GM12878 (cell line): ENCODE measurements at regions of chr3 and their contacts with region 1.

Region 1: DNA sequence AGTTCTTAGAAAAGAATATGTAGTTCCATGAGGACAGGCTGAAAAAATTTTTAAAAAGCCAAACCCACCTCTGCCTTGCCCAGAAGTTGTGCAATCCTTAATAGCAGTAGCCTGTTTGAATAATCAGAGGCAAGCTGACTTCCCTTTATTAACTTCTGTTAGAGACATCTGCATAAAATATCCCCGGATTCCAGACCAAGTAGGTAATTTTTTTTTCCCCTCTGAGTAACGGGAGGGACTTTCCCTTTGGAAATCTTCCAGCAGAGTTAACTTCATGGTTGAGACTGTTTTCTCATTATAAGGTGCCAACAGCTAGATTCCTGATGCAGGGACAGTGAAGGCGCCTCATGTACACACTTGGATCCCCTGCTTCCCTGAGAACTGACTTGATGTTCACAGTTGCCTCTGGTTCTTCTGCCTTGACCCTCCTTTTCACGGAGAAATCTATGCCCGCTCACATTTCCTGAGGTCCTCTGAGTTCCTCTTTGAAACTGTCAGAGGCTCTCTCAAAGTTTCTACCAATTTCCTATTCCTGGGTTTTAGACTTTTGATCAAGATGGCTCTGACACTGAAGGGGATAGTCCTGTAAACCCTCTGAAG is 227.6 kb upstream of the BHLHE40 start:
- DNase-seq: no peak
- ATAC-seq: peak; percentile 3
- H3K4me3 ChIP-seq: peak overlapping the region; percentile 65
- H3K27ac ChIP-seq: peak overlapping the region; percentile 95
- H3K4me1 ChIP-seq: peaks cover 71% of the 10 kb centered on the region
- H3K27me3 ChIP-seq: no peaks in the 10 kb centered on the region
- CTCF ChIP-seq: no peak
- EP300 ChIP-seq: peak in 1 of 2 experiments; percentile 4; a peak in 1 of 4 replicates
- POLR2A ChIP-seq: no peak
- RAD21 ChIP-seq: no peak

Region 2: GRCh38 chr3:4314688-4315087 is 436.9 kb before region 1 on chr3:
- CTCF ChIA-PET with region 1: no interaction called
- POLR2A ChIA-PET with region 1: no interaction called
- RAD21 ChIA-PET with region 1: no interaction called
- SMC1A ChIA-PET with region 1: no interaction called
- in situ Hi-C with region 1: no loop called
- intact Hi-C with region 1: no loop called
- DNase-seq: no peak
- ATAC-seq: peak; percentile 59
- H3K4me3 ChIP-seq: no peak overlapping the region
- H3K27ac ChIP-seq: no peak overlapping the region
- H3K4me1 ChIP-seq: no peaks in the 10 kb centered on the region
- H3K27me3 ChIP-seq: no peaks in the 10 kb centered on the region
- CTCF ChIP-seq: peak in 2 of 3 experiments; percentile 13 to 14; a peak in 2 of 6 replicates
- EP300 ChIP-seq: no peak
- POLR2A ChIP-seq: no peak
- RAD21 ChIP-seq: no peak

Region 3: GRCh38 chr3:4670352-4670751 is 81.2 kb before region 1 on chr3:
- CTCF ChIA-PET with region 1: no interaction called
- POLR2A ChIA-PET with region 1: no interaction called
- RAD21 ChIA-PET with region 1: no interaction called
- SMC1A ChIA-PET with region 1: no interaction called
- in situ Hi-C with region 1: no loop called
- intact Hi-C with region 1: no loop called
- DNase-seq: no peak
- ATAC-seq: peak; percentile 74
- H3K4me3 ChIP-seq: no peak overlapping the region
- H3K27ac ChIP-seq: no peak overlapping the region
- H3K4me1 ChIP-seq: no peaks in the 10 kb centered on the region
- H3K27me3 ChIP-seq: no peaks in the 10 kb centered on the region
- CTCF ChIP-seq: peak in 2 of 3 experiments; percentile 23 to 28; a peak in 1 of 6 replicates
- EP300 ChIP-seq: no peak
- POLR2A ChIP-seq: no peak
- RAD21 ChIP-seq: no peak; the same call in 1 of the 2 replicates

Region 4: DNA sequence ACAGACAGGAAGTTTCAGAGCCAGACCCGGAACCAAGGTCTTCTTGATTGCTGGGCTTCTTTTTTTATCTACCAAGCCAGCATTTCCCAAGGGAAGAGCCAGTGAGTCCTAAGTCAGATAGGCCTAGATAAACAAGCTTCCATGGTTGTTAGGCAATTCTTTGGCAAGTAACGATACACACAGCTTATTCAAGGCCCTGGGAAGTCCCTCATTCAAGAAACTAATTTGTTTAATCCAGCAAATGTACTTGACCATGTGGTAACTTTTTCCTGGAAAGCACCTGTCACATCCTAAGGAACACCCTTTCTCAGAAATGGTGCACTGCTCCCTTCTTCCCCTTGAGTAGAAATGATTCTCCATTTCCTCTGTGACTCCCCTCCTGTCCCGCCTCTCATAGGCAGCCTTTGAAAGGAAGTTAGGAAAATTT is 48.5 kb before region 1 on chr3:
- CTCF ChIA-PET with region 1: no interaction called
- POLR2A ChIA-PET with region 1: no interaction called
- RAD21 ChIA-PET with region 1: no interaction called
- SMC1A ChIA-PET with region 1: no interaction called
- in situ Hi-C with region 1: no loop called
- intact Hi-C with region 1: no loop called
- DNase-seq: no peak
- ATAC-seq: no peak
- H3K4me3 ChIP-seq: no peak overlapping the region
- H3K27ac ChIP-seq: no peak overlapping the region
- H3K4me1 ChIP-seq: no peaks in the 10 kb centered on the region
- H3K27me3 ChIP-seq: no peaks in the 10 kb centered on the region
- CTCF ChIP-seq: no peak
- EP300 ChIP-seq: no peak
- POLR2A ChIP-seq: no peak
- RAD21 ChIP-seq: no peak

Region 5: GRCh38 chr3:4730719-4731118 is 20.9 kb before region 1 on chr3:
- CTCF ChIA-PET with region 1: interaction called, 7 read pairs
- POLR2A ChIA-PET with region 1: interaction called, 23 read pairs
- RAD21 ChIA-PET with region 1: interaction called, 264 read pairs
- SMC1A ChIA-PET with region 1: interaction called, 429 read pairs
- in situ Hi-C with region 1: no loop called
- intact Hi-C with region 1: loop called (anchors 2 kb)
- DNase-seq: no peak
- ATAC-seq: no peak
- H3K4me3 ChIP-seq: no peak overlapping the region
- H3K27ac ChIP-seq: no peak overlapping the region
- H3K4me1 ChIP-seq: no peaks in the 10 kb centered on the region
- H3K27me3 ChIP-seq: no peaks in the 10 kb centered on the region
- CTCF ChIP-seq: no peak
- EP300 ChIP-seq: no peak
- POLR2A ChIP-seq: no peak
- RAD21 ChIP-seq: no peak

Region 6: DNA sequence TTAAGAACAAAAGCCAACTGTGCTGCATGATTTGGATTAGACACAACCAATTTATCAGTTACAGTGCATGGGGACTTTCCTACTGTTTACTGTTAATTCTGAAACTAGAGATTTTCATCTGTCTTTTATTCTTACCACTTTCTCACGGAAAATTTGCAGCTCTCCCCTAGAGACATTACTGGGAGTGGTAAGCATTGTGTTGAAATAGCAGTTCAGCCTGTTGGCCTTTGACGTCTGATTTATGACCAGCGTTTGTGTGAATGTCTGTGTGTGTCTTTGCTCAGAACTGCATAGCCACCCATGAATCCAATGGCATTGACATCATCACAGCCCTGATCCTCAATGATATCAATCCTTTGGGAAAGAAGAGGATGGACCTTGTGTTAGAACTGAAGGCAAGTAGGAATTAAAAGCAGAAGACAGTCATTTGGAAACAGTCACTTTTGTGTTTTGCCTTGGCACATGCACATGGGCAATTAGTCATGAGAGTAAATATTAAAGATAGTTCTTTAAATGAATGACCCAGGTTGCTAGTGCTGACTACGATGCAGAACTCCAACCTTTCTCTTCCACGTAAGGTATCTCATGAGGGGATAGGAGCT is 25.5 kb after region 1 on chr3:
- CTCF ChIA-PET with region 1: interaction called, 95 read pairs
- POLR2A ChIA-PET with region 1: interaction called, 414 read pairs
- RAD21 ChIA-PET with region 1: interaction called, 377 read pairs
- SMC1A ChIA-PET with region 1: interaction called, 618 read pairs
- in situ Hi-C with region 1: no loop called
- intact Hi-C with region 1: loop called (anchors 1 kb)
- DNase-seq: peak; percentile 98
- ATAC-seq: peak; percentile 82
- H3K4me3 ChIP-seq: no peak overlapping the region
- H3K27ac ChIP-seq: peak overlapping the region; percentile 99
- H3K4me1 ChIP-seq: peaks cover 32% of the 10 kb centered on the region
- H3K27me3 ChIP-seq: no peaks in the 10 kb centered on the region
- CTCF ChIP-seq: no peak
- EP300 ChIP-seq: peak; percentile 90 to 97; a peak in 3 of 4 replicates
- POLR2A ChIP-seq: peak; percentile 53; the same call in 1 of the 2 replicates
- RAD21 ChIP-seq: peak; percentile 41

Region 7: GRCh38 chr3:4834403-4834866 is 82.8 kb after region 1 on chr3:
- CTCF ChIA-PET with region 1: interaction called, 6 read pairs
- POLR2A ChIA-PET with region 1: interaction called, 73 read pairs
- RAD21 ChIA-PET with region 1: interaction called, 11 read pairs
- SMC1A ChIA-PET with region 1: interaction called, 49 read pairs
- in situ Hi-C with region 1: no loop called
- intact Hi-C with region 1: loop called (anchors 2 kb)
- DNase-seq: no peak
- ATAC-seq: peak; percentile 63
- H3K4me3 ChIP-seq: no peak overlapping the region
- H3K27ac ChIP-seq: peak overlapping the region; percentile 43; the same call in 1 of the 2 replicates
- H3K4me1 ChIP-seq: peaks cover 43% of the 10 kb centered on the region
- H3K27me3 ChIP-seq: no peaks in the 10 kb centered on the region
- CTCF ChIP-seq: no peak
- EP300 ChIP-seq: peak; percentile 89 to 95; a peak in 3 of 4 replicates
- POLR2A ChIP-seq: no peak
- RAD21 ChIP-seq: 0 out of 2 replicates have a peak, but pooled peaks have one; percentile 4

Region 8: GRCh38 chr3:4972652-4973643 is 221.3 kb after region 1 on chr3:
- CTCF ChIA-PET with region 1: interaction called, 35 read pairs
- POLR2A ChIA-PET with region 1: interaction called, 230 read pairs
- RAD21 ChIA-PET with region 1: interaction called, 342 read pairs
- SMC1A ChIA-PET with region 1: interaction called, 122 read pairs
- in situ Hi-C with region 1: no loop called
- intact Hi-C with region 1: loop called (anchors 1 kb)
- DNase-seq: peak; percentile 68
- ATAC-seq: peak; percentile 23
- H3K4me3 ChIP-seq: peak overlapping the region; percentile 37; the same call in 1 of the 2 replicates
- H3K27ac ChIP-seq: peak overlapping the region; percentile 45
- H3K4me1 ChIP-seq: peaks cover 29% of the 10 kb centered on the region
- H3K27me3 ChIP-seq: no peaks in the 10 kb centered on the region
- CTCF ChIP-seq: no peak
- EP300 ChIP-seq: peak; percentile 60 to 86; a peak in 3 of 4 replicates
- POLR2A ChIP-seq: no peak
- RAD21 ChIP-seq: no peak

Region 9: GRCh38 chr3:5026331-5027218 is 275.0 kb after region 1 on chr3:
- CTCF ChIA-PET with region 1: interaction called, 4 read pairs
- POLR2A ChIA-PET with region 1: interaction called, 6 read pairs
- RAD21 ChIA-PET with region 1: interaction called, 13 read pairs
- SMC1A ChIA-PET with region 1: interaction called, 4 read pairs
- in situ Hi-C with region 1: no loop called
- intact Hi-C with region 1: no loop called
- DNase-seq: no peak
- ATAC-seq: peak; percentile 83
- H3K4me3 ChIP-seq: peak overlapping the region; percentile 61; the same call in 1 of the 2 replicates
- H3K27ac ChIP-seq: peak overlapping the region; percentile 68
- H3K4me1 ChIP-seq: peaks cover 31% of the 10 kb centered on the region
- H3K27me3 ChIP-seq: no peaks in the 10 kb centered on the region
- CTCF ChIP-seq: peak; percentile 63 to 72 (median 71)
- EP300 ChIP-seq: no peak; a peak in 1 of 4 replicates
- POLR2A ChIP-seq: 0 out of 2 replicates have a peak, but pooled peaks have one; percentile 31
- RAD21 ChIP-seq: peak; percentile 86